ENCODE measurements at regions of chr12 and their contacts with region 1.

Region 1: GRCh38 chr12:92928962-92929915 is at the start of gene EEA1:
- DNase-seq: peak; percentile 92 to 94 (median 94)
- H3K4me3 ChIP-seq: peak within 1 kb of the TSS; percentile 57 to 59
- H3K4me3 Mint-ChIP-seq: peak within 1 kb of the TSS; percentile 89 to 94 (median 92)
- H3K27ac ChIP-seq: peak within 1 kb of the TSS; percentile 90
- H3K27ac Mint-ChIP-seq: peak within 1 kb of the TSS; percentile 87 to 98 (median 95)
- H3K4me1 ChIP-seq: peaks cover 28% of the 10 kb centered on the region
- H3K4me1 Mint-ChIP-seq: peaks cover 21 to 38% (median 32%) of the 10 kb centered on the region in 4 donors
- H3K27me3 ChIP-seq: no peaks in the 10 kb centered on the region
- H3K27me3 Mint-ChIP-seq: no peaks in the 10 kb centered on the region
- total RNA-seq, gene EEA1: 16.1 to 16.4 TPM

Region 2: GRCh38 chr12:92784795-92785562 is 144.3 kb before region 1 on chr12:
- CTCF ChIA-PET with region 1: interaction called, 11 read pairs
- POLR2A ChIA-PET with region 1: interaction called, 3 read pairs
- intact Hi-C with region 1: loop called (anchors 1 kb)
- DNase-seq: peak; percentile 54 to 73 (median 67)
- H3K4me3 ChIP-seq: no peak overlapping the region
- H3K4me3 Mint-ChIP-seq: no peak overlapping the region
- H3K27ac ChIP-seq: no peak overlapping the region
- H3K27ac Mint-ChIP-seq: peak overlapping the region in 1 of 7 donors; percentile 4
- H3K4me1 ChIP-seq: no peaks in the 10 kb centered on the region
- H3K4me1 Mint-ChIP-seq: peaks cover 0 to 4% (median 2%) of the 10 kb centered on the region in 4 donors
- H3K27me3 ChIP-seq: no peaks in the 10 kb centered on the region
- H3K27me3 Mint-ChIP-seq: no peaks in the 10 kb centered on the region

Region 3: GRCh38 chr12:92827836-92828431 is 101.3 kb before region 1 on chr12:
- CTCF ChIA-PET with region 1: interaction called, 4 read pairs
- POLR2A ChIA-PET with region 1: interaction called, 3 read pairs
- intact Hi-C with region 1: loop called (anchors 5 kb)
- DNase-seq: peak in 4 of 5 donors; percentile 19 to 31 (median 26)
- H3K4me3 ChIP-seq: no peak overlapping the region
- H3K4me3 Mint-ChIP-seq: no peak overlapping the region
- H3K27ac ChIP-seq: no peak overlapping the region
- H3K27ac Mint-ChIP-seq: no peak overlapping the region
- H3K4me1 ChIP-seq: no peaks in the 10 kb centered on the region
- H3K4me1 Mint-ChIP-seq: peaks cover 0 to 5% (median 0%) of the 10 kb centered on the region in 4 donors
- H3K27me3 ChIP-seq: no peaks in the 10 kb centered on the region
- H3K27me3 Mint-ChIP-seq: no peaks in the 10 kb centered on the region

Region 4: DNA sequence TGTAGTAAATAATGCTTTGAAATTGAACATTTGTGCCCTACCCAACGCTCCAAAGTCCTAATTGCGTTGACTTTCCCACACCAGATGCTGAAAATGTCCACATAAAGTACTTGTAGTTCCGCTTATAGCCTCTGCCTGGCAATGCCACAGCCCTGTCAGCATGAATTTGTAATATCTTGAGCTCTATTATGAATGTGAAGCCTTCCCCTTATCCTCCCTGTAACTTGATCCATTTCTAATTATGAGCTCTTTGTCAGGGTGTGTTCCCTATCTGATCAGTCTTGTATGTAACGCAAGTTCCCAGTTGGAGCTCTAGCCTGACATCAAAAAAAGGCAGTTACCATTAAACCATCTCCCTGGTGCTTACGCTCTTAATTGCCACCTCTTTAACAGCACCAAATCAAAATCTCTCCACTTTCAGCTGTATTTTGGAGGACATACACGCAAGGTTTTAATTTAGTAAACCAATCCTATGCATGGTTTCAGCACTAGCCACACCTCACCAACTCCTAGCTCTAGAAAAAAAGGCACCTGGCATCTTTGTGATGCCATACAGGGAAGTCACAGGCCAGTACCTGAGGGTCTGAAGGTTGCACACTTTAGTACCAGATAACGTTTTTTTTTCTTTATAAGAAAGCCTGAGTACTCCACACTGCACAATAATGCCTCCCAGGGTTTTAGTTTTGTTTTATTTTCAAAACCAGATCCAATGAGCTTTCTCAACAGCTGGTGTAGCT is 69.4 kb before region 1 on chr12:
- CTCF ChIA-PET with region 1: no interaction called
- POLR2A ChIA-PET with region 1: no interaction called
- intact Hi-C with region 1: loop called (anchors 5 kb)
- DNase-seq: no peak
- H3K4me3 ChIP-seq: no peak overlapping the region
- H3K4me3 Mint-ChIP-seq: no peak overlapping the region
- H3K27ac ChIP-seq: no peak overlapping the region
- H3K27ac Mint-ChIP-seq: no peak overlapping the region
- H3K4me1 ChIP-seq: no peaks in the 10 kb centered on the region
- H3K4me1 Mint-ChIP-seq: peaks cover 4 to 10% (median 8%) of the 10 kb centered on the region in 4 donors
- H3K27me3 ChIP-seq: no peaks in the 10 kb centered on the region
- H3K27me3 Mint-ChIP-seq: no peaks in the 10 kb centered on the region

Region 5: GRCh38 chr12:92908108-92908507 is 21.1 kb before region 1 on chr12:
- CTCF ChIA-PET with region 1: interaction called, 10 read pairs
- POLR2A ChIA-PET with region 1: interaction called, 36 read pairs
- intact Hi-C with region 1: no loop called
- DNase-seq: peak; percentile 43 to 66 (median 46)
- H3K4me3 ChIP-seq: peak overlapping the region in 1 of 2 donors; percentile 2
- H3K4me3 Mint-ChIP-seq: peak overlapping the region in 6 of 8 donors; percentile 6 to 71 (median 50)
- H3K27ac ChIP-seq: no peak overlapping the region
- H3K27ac Mint-ChIP-seq: no peak overlapping the region
- H3K4me1 ChIP-seq: peaks cover 34% of the 10 kb centered on the region
- H3K4me1 Mint-ChIP-seq: peaks cover 33 to 55% (median 36%) of the 10 kb centered on the region in 4 donors
- H3K27me3 ChIP-seq: no peaks in the 10 kb centered on the region
- H3K27me3 Mint-ChIP-seq: no peaks in the 10 kb centered on the region

Region 6: GRCh38 chr12:93378373-93379325 is 449.4 kb after region 1 on chr12:
- CTCF ChIA-PET with region 1: no interaction called
- POLR2A ChIA-PET with region 1: interaction called, 11 read pairs
- intact Hi-C with region 1: loop called (anchors 1 kb)
- DNase-seq: peak; percentile 63 to 73 (median 69)
- H3K4me3 ChIP-seq: peak overlapping the region; percentile 71 to 88
- H3K4me3 Mint-ChIP-seq: peak overlapping the region; percentile 98 to 100 (median 99)
- H3K27ac ChIP-seq: peak overlapping the region; percentile 84
- H3K27ac Mint-ChIP-seq: peak overlapping the region; percentile 96 to 100 (median 99)
- H3K4me1 ChIP-seq: peaks cover 43% of the 10 kb centered on the region
- H3K4me1 Mint-ChIP-seq: peaks cover 28 to 57% (median 43%) of the 10 kb centered on the region in 4 donors
- H3K27me3 ChIP-seq: no peaks in the 10 kb centered on the region
- H3K27me3 Mint-ChIP-seq: no peaks in the 10 kb centered on the region

Region 7: GRCh38 chr12:93441617-93442410 is 512.6 kb after region 1 on chr12 and contains the start of gene UBE2N:
- CTCF ChIA-PET with region 1: no interaction called
- POLR2A ChIA-PET with region 1: interaction called, 6 read pairs
- intact Hi-C with region 1: loop called (anchors 1 kb)
- DNase-seq: peak; percentile 95 to 97 (median 97)
- H3K4me3 ChIP-seq: peak within 1 kb of the TSS; percentile 90 to 98
- H3K4me3 Mint-ChIP-seq: peak within 1 kb of the TSS; percentile 94 to 98 (median 97)
- H3K27ac ChIP-seq: peak within 1 kb of the TSS; percentile 95
- H3K27ac Mint-ChIP-seq: peak within 1 kb of the TSS; percentile 94 to 100 (median 99)
- H3K4me1 ChIP-seq: peaks cover 48% of the 10 kb centered on the region
- H3K4me1 Mint-ChIP-seq: peaks cover 36 to 51% (median 45%) of the 10 kb centered on the region in 4 donors
- H3K27me3 ChIP-seq: no peaks in the 10 kb centered on the region
- H3K27me3 Mint-ChIP-seq: no peaks in the 10 kb centered on the region
- total RNA-seq, gene UBE2N: 71.2 to 72.8 TPM